Cardiac septum (tissue), 1 donor: ENCODE measurements at regions of chr9 and their contacts with region 1.

Region 1: GRCh38 chr9:78035383-78035993 is 3.9 kb upstream of the GNAQ start:
- DNase-seq: no peak

Region 2: GRCh38 chr9:77177161-77177893 is 858.2 kb before region 1 on chr9 and contains the start of gene VPS13A:
- intact Hi-C with region 1: loop called (anchors 5 kb)
- DNase-seq: peak; percentile 96
- total RNA-seq, gene VPS13A: 50.2 TPM

Region 3: GRCh38 chr9:77456829-77457437 is 578.6 kb before region 1 on chr9:
- intact Hi-C with region 1: loop called (anchors 10 kb)
- DNase-seq: peak; percentile 89

Region 4: GRCh38 chr9:77764894-77765780 is 270.4 kb before region 1 on chr9:
- intact Hi-C with region 1: loop called (anchors 10 kb)
- DNase-seq: no peak

Region 5: DNA sequence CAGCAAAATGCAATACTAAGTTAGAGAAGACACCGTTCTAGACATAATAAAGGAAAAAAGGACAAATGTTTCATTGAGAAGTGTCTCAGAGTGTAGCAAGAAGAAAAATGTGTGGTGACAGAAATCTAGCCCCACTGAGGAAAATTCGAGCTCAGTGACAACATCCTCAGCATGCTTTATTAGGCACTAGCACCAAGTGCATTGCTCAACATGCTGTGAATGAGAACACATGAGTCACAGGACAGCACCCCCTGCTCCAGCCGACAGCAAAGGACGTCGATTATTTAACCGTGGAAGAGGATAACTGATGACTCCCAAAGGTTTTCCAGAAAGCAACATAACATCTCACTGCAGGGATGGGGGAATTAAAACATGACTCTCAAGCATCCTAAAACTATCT is 186.6 kb before region 1 on chr9:
- intact Hi-C with region 1: loop called (anchors 5 kb)
- DNase-seq: no peak

Region 6: DNA sequence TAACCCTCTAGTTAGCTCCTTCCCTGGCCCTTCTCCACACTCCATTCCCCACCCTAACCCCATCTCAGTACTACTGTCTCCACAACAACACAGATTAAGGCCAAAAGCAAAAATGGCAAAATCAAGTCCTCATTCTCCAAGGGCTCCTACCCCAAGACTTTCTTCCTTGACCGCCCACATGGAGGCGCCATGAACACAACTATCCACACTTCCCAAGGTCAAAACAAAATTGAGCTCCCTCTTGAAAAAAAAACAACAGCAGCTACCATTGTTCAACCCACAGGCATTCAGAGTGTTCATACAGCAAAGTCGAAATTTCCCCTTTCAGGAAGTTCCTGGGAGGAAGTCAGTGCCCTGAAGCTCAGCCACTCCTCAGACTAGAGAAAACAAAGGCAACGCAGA is 58.3 kb before region 1 on chr9:
- intact Hi-C with region 1: loop called (anchors 2 kb)
- DNase-seq: no peak

Region 7: DNA sequence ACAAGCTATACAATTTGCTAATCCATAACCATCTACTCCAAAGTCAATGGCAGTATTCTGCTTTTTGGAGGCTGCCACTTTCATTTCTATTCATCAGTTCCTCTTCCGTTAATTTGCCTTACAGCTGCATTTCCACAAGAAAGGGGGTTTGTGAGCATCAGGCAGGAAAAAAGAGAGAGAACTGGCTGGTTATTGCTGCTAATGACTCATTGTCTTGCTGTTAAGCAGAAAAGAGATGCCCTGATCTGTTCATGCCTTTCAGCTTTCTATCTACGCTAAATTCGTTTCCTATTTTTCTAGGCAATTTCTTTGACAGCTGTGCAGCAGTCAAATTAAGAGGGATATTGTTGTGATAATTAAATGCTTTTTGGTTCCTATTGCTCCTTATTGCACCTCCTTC is 62.1 kb after region 1 on chr9:
- intact Hi-C with region 1: no loop called
- DNase-seq: no peak